AG04450 (cell line): ENCODE measurements at regions of chr12 and their contacts with region 1.

Region 1: GRCh38 chr12:6825398-6826124 is 2.6 kb upstream of the P3H3 start:
- DNase-seq: peak; percentile 60
- H3K4me3 ChIP-seq: peak overlapping the region; percentile 36
- H3K27ac ChIP-seq: no peak overlapping the region
- H3K27me3 ChIP-seq: no peaks in the 10 kb centered on the region
- CTCF ChIP-seq: peak; percentile 96

Region 2: GRCh38 chr12:6607751-6608591 is 217.6 kb before region 1 on chr12:
- CTCF ChIA-PET with region 1: no interaction called
- POLR2A ChIA-PET with region 1: no interaction called
- DNase-seq: no peak
- H3K4me3 ChIP-seq: no peak overlapping the region; the same call in 1 of the 2 replicates
- H3K27ac ChIP-seq: no peak overlapping the region
- H3K27me3 ChIP-seq: no peaks in the 10 kb centered on the region
- CTCF ChIP-seq: no peak

Region 3: GRCh38 chr12:6810758-6811157 is 14.8 kb before region 1 on chr12:
- CTCF ChIA-PET with region 1: interaction called, 10 read pairs
- POLR2A ChIA-PET with region 1: interaction called, 5 read pairs
- DNase-seq: no peak
- H3K4me3 ChIP-seq: no peak overlapping the region
- H3K27ac ChIP-seq: no peak overlapping the region
- H3K27me3 ChIP-seq: no peaks in the 10 kb centered on the region
- CTCF ChIP-seq: no peak

Region 4: DNA sequence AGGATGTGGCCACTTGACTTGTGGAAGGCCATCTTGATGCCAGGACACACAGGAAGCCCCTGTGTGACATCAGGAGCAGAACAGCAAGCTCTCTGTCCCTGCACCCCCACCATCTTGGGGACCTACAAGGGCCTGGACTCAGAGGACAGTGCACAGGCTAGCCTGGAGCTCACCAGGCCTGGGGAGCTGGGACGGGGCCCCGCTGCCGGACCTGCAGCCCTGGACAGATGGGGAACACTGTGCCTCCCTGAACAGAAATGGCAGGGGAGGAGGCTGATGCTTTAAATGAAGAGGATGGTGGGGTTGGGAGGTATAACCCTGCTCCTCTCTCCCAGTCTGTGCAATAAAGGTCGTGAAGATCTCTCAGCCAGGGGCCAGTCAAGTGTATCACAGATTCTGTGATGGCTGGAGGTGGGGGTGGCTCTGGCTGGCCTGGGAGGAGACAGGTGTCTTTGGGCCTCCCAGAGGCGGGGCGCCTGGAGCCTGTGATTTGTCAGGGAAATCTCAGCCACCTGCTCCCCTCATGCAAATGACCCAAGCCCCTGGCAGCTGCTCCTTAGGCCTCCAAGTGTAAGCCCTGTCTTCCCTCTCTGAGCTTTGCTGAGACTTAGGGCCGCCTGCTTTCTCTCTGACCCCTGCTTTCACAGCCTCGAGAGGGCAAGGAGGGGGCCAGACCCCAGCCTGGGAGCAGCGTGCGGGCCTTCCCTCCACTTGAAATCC is 14.1 kb after region 1 on chr12:
- CTCF ChIA-PET with region 1: interaction called, 27 read pairs
- POLR2A ChIA-PET with region 1: interaction called, 14 read pairs
- DNase-seq: no peak
- H3K4me3 ChIP-seq: no peak overlapping the region
- H3K27ac ChIP-seq: no peak overlapping the region
- H3K27me3 ChIP-seq: no peaks in the 10 kb centered on the region
- CTCF ChIP-seq: no peak